GM13977 (cell line): ENCODE measurements at regions of chr1 and their contacts with region 1.

Region 1: GRCh38 chr1:78839704-78840277 is 166.7 kb downstream of the ADGRL4 start:
- DNase-seq: peak; percentile 41
- CTCF ChIP-seq: peak; percentile 66

Region 2: GRCh38 chr1:78440381-78440793 is 399.4 kb before region 1 on chr1:
- in situ Hi-C with region 1: no loop called
- DNase-seq: no peak
- CTCF ChIP-seq: no peak

Region 3: GRCh38 chr1:79353224-79353623 is 513.4 kb after region 1 on chr1:
- in situ Hi-C with region 1: loop called (anchors 25 kb)
- DNase-seq: no peak
- CTCF ChIP-seq: peak; percentile 52